ENCODE measurements at regions of chr11 and their contacts with region 1.

Region 1: GRCh38 chr11:18634140-18635032 is at the start of gene SPTY2D1:
- DNase-seq: peak; percentile 99
- H3K4me3 Mint-ChIP-seq: peak within 1 kb of the TSS; percentile 93
- H3K27ac Mint-ChIP-seq: peak within 1 kb of the TSS; percentile 98
- H3K4me1 Mint-ChIP-seq: peaks cover 24% of the 10 kb centered on the region
- H3K27me3 Mint-ChIP-seq: no peaks in the 10 kb centered on the region
- total RNA-seq, gene SPTY2D1: 22.6 and 22.8 TPM in 2 replicates

Region 2: DNA sequence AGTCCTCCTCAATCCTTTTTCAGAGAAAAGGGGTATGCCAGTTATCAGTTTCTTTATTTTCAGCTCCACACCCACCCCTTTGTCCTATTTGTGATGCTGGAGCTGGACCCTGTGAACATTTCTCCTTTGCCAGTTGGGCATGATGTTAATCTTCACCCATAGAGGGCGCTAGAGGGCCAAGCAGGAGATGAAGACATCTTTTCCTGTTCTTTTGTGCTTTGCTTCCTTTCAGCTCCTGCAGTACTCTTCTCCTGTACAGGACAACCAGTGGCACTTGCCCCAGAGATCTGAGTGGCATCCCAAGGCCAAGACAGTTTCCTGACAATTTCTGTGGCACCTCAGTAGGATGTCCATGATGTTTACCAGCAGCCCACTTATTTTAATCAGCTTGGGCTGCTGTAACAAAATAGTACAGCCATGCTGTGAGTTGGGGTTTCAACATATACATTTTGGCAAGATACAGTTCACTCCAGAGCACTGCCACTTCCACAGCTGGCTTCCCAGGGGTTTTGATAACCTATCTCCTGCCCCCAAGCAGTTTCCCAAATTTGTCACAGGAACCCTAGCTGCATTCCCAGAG is 390.5 kb before region 1 on chr11:
- intact Hi-C with region 1: loop called (anchors 10 kb)
- DNase-seq: peak; percentile 93
- H3K4me3 Mint-ChIP-seq: no peak overlapping the region
- H3K27ac Mint-ChIP-seq: no peak overlapping the region
- H3K4me1 Mint-ChIP-seq: peaks cover 26% of the 10 kb centered on the region
- H3K27me3 Mint-ChIP-seq: peaks cover 27% of the 10 kb centered on the region

Region 3: DNA sequence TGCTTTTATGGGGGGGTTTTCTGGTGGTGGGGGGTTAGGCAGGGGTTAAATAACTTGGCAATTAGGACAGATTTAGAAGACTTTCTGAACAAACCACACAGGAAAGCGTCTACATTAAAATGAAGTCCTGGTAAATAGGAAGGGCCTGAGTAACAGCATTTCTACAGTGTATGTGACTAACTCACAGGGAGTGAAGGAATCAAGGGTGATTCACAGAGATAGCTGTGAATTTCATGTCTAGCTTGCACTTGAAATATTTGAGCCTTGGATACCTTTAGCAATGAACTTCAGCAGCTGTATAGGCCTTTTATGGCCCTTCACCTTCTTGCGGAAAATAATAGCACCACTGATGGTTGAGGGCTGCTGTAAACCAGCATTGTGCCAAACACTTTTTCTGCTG is 266.2 kb before region 1 on chr11:
- intact Hi-C with region 1: no loop called
- DNase-seq: no peak
- H3K4me3 Mint-ChIP-seq: no peak overlapping the region
- H3K27ac Mint-ChIP-seq: no peak overlapping the region
- H3K4me1 Mint-ChIP-seq: peaks cover 10% of the 10 kb centered on the region
- H3K27me3 Mint-ChIP-seq: no peaks in the 10 kb centered on the region

Region 4: GRCh38 chr11:18395735-18396504 is 238.5 kb before region 1 on chr11:
- intact Hi-C with region 1: loop called (anchors 1 kb)
- DNase-seq: peak; percentile 99
- H3K4me3 Mint-ChIP-seq: peak overlapping the region; percentile 97
- H3K27ac Mint-ChIP-seq: peak overlapping the region; percentile 98
- H3K4me1 Mint-ChIP-seq: peaks cover 54% of the 10 kb centered on the region
- H3K27me3 Mint-ChIP-seq: no peaks in the 10 kb centered on the region

Region 5: DNA sequence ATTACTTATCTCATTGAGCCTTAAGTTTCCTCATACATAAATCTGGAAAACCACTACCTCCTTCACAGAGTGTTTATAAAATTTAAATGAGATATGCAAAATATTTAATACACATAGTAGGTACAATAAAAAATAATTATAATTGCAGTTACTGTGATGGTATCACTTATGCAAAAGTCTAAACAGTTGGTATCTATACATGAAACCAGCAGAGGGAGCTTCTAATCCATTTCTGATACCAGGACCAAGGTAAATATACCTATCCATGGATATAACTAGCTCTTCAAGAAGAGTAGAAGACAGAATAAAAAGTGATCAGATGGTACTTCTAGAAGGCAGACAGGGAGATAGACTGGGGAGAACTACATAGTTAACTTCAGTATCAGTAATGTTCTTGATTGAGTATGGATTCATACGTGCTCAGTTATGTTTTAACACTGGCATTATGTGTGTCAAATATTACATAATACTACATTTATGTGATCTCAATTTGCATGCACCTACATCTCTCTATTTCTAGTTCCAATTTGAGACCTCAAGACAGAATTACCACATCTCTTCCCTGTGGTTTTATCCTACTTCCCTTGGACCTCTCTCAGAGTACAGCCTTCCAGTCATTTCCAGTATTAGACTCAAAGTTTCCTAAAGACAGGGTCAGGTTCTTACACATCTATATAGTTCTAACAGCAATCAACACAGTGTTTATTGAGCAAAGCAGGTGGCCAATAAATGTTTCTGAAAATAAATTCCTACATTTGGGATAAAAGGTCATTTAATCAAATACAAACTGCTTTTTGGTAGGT is 94.0 kb before region 1 on chr11:
- intact Hi-C with region 1: loop called (anchors 1 kb)
- DNase-seq: peak; percentile 67
- H3K4me3 Mint-ChIP-seq: no peak overlapping the region
- H3K27ac Mint-ChIP-seq: no peak overlapping the region
- H3K4me1 Mint-ChIP-seq: peaks cover 7% of the 10 kb centered on the region
- H3K27me3 Mint-ChIP-seq: no peaks in the 10 kb centered on the region

Region 6: DNA sequence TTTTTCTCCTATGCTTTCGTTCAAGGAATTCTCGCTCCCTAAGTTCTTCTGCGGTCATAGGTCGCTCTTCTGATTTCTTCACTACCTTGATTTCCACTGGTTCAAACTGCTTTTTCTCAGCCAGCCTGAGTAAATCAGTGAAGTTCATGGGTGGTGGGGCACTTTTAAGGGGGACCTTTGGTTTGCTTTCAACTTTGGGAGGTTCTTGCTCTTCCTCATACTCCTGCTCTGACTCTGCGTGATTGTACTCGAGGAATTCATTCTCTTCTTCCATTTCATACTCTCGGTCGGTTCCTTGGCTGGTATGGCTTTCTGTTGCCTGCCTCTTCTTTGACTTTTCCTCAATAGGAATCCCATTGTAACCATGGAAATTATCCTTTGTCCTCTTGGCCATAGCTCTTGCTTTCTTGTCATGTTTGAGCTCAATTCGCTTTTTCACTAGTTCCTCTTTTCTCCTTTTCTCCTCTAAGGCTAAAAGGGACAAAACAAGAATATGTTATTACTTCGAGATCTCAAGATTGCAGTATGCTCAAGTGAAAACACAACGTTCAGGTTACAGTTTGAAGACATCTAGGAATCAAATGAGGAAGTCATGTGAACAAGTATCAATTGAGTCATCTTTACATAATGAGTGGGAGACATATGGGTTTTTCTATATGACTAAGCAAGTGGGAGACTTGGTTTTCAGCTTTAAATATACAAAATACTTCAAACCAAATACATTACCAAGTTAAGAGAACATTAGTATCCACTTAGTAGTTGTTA is 18.6 kb before region 1 on chr11:
- intact Hi-C with region 1: loop called (anchors 1 kb)
- DNase-seq: no peak
- H3K4me3 Mint-ChIP-seq: peak overlapping the region; percentile 77
- H3K27ac Mint-ChIP-seq: peak overlapping the region; percentile 85
- H3K4me1 Mint-ChIP-seq: peaks cover 44% of the 10 kb centered on the region
- H3K27me3 Mint-ChIP-seq: no peaks in the 10 kb centered on the region

Region 7: GRCh38 chr11:18698341-18699268 is 64.2 kb after region 1 on chr11 and contains the start of gene TMEM86A:
- intact Hi-C with region 1: loop called (anchors 2 kb)
- DNase-seq: peak; percentile 97
- H3K4me3 Mint-ChIP-seq: peak within 1 kb of the TSS; percentile 81
- H3K27ac Mint-ChIP-seq: peak within 1 kb of the TSS; percentile 26
- H3K4me1 Mint-ChIP-seq: peaks cover 21% of the 10 kb centered on the region
- H3K27me3 Mint-ChIP-seq: peaks cover 23% of the 10 kb centered on the region
- total RNA-seq, gene TMEM86A: 0.21 and 0.73 TPM in 2 replicates

Region 8: GRCh38 chr11:18791207-18791968 is 157.0 kb after region 1 on chr11 and contains the start of gene PTPN5:
- intact Hi-C with region 1: no loop called
- DNase-seq: no peak
- H3K4me3 Mint-ChIP-seq: peak within 1 kb of the TSS; percentile 4
- H3K27ac Mint-ChIP-seq: no peak within 1 kb of the TSS
- H3K4me1 Mint-ChIP-seq: no peaks in the 10 kb centered on the region
- H3K27me3 Mint-ChIP-seq: peaks cover 69% of the 10 kb centered on the region
- total RNA-seq, gene PTPN5: not detected in 2 replicates

Region 9: GRCh38 chr11:19055016-19055415 is 420.6 kb after region 1 on chr11:
- intact Hi-C with region 1: no loop called
- DNase-seq: no peak
- H3K4me3 Mint-ChIP-seq: no peak overlapping the region
- H3K27ac Mint-ChIP-seq: no peak overlapping the region
- H3K4me1 Mint-ChIP-seq: peaks cover 1% of the 10 kb centered on the region
- H3K27me3 Mint-ChIP-seq: peaks cover 6% of the 10 kb centered on the region

Measured in activated CD4-positive, alpha-beta T cell treated with anti-CD3 and anti-CD28 coated beads, Interleukin-2, amount 10 ng/mL, durations not matched to agents 24 days and 14 days (primary cell).